ENCODE measurements at regions of chrX and their contacts with region 1.

Region 1: DNA sequence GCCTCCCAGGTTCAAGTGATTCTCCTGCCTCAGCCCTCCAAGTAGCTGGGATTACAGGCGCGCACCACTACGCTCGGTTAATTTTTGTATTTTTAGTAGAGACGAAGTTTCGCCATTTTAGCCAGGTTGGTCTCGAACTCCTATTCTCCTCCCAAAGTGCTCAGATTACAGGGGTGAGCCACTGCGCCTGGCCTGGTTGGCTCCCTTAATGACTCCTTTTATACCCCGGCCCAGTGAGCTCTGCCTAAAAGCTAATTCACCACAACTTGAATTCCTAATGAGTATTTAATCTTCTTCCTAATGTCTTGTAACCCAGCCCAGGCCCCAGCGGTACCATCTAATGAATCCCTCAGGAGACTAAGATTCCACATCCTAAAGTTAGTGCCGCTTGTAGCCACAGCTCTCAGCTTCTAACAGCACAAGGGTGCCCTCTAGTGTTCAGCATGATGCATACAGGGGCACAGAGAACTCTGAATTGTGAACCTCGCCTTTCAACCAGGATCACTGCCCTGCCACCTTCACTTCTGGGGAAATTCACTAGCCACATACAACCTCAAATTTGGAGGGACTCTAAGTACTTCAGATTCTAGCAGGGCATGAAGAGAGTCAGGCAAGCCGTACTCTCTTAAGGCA is 89.5 kb downstream of the OR13H1 start:
- DNase-seq: peak; percentile 44
- H3K4me3 Mint-ChIP-seq: no peak overlapping the region
- H3K27ac Mint-ChIP-seq: no peak overlapping the region
- H3K4me1 Mint-ChIP-seq: peaks cover 3% of the 10 kb centered on the region
- H3K27me3 Mint-ChIP-seq: no peaks in the 10 kb centered on the region

Region 2: GRCh38 chrX:130975947-130976346 is 657.5 kb before region 1 on chrX:
- CTCF ChIA-PET with region 1: interaction called, 4 read pairs
- POLR2A ChIA-PET with region 1: no interaction called
- intact Hi-C with region 1: loop called (anchors 1 kb)
- DNase-seq: peak; percentile 27
- H3K4me3 Mint-ChIP-seq: no peak overlapping the region
- H3K27ac Mint-ChIP-seq: no peak overlapping the region
- H3K4me1 Mint-ChIP-seq: no peaks in the 10 kb centered on the region
- H3K27me3 Mint-ChIP-seq: no peaks in the 10 kb centered on the region

Region 3: DNA sequence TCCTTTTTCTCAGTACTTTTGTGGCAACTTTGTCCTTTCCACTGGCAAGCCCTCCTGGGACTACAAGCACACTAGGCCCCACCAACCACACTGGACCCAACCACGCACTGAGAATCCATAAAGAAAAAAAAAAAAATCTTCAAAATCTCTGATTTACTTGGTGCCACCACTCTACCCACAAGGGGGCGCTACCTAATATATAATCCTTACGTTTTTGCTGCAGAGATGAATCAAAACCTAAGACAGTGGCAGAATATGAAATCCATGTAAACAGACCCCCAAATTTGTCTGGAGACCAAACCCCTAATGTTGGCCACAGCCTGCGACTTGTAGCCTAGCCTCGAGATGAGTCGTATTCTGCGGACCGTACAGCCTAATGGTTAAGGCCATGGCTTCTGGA is 638.7 kb before region 1 on chrX:
- CTCF ChIA-PET with region 1: no interaction called
- POLR2A ChIA-PET with region 1: no interaction called
- intact Hi-C with region 1: loop called (anchors 1 kb)
- DNase-seq: peak; percentile 13
- H3K4me3 Mint-ChIP-seq: no peak overlapping the region
- H3K27ac Mint-ChIP-seq: no peak overlapping the region
- H3K4me1 Mint-ChIP-seq: no peaks in the 10 kb centered on the region
- H3K27me3 Mint-ChIP-seq: no peaks in the 10 kb centered on the region

Region 4: DNA sequence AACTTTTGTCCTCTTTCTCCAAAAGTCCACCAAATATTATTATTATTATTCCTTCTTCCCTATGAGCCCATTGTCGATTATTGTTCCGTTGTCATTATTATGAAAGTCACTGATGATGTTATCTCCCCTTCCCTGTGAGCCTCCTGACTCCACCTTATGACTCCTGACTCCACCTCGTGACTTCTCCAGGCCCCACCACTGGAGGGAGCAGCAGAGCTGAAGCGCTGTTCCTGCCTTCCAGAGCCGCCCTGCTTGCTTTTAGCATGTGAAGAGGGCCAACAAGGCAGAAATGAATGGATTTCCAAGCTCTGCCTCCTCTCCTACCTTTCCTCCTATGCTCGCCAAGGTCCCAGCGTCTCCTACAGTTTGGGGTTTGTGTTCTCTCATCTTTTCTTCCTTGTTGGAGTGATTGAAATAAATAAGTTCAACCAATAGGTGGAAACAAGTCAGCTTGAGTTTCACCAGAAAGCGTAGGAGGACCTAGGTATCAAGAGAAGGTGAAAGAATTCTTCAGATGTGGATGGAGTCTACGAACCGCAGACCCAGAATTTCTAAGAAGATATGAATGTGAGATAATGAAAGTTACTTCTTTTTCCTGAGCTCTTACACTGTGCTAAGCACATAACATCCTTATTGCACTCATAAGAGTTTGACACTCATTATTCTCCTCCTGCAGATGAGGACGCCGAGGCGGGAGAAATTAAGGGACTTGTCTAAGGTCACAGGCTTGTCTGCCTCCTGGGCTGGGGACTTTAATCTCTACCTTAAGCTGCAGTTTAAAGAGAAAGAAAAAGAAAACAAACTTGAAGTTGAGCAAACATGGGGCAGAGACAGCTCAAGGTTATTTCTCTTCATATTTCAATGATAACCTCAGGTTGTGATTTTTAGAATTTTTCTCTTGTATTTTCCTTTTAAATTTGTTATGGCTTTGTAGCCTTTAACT is 370.4 kb before region 1 on chrX:
- CTCF ChIA-PET with region 1: no interaction called
- POLR2A ChIA-PET with region 1: no interaction called
- intact Hi-C with region 1: loop called (anchors 2 kb)
- DNase-seq: peak; percentile 24
- H3K4me3 Mint-ChIP-seq: no peak overlapping the region
- H3K27ac Mint-ChIP-seq: no peak overlapping the region
- H3K4me1 Mint-ChIP-seq: peaks cover 2% of the 10 kb centered on the region
- H3K27me3 Mint-ChIP-seq: no peaks in the 10 kb centered on the region

Region 5: GRCh38 chrX:131677655-131678628 is 44.5 kb after region 1 on chrX:
- CTCF ChIA-PET with region 1: interaction called, 8 read pairs
- POLR2A ChIA-PET with region 1: no interaction called
- intact Hi-C with region 1: loop called (anchors 5 kb)
- DNase-seq: peak; percentile 35
- H3K4me3 Mint-ChIP-seq: no peak overlapping the region
- H3K27ac Mint-ChIP-seq: no peak overlapping the region
- H3K4me1 Mint-ChIP-seq: no peaks in the 10 kb centered on the region
- H3K27me3 Mint-ChIP-seq: no peaks in the 10 kb centered on the region

Region 6: DNA sequence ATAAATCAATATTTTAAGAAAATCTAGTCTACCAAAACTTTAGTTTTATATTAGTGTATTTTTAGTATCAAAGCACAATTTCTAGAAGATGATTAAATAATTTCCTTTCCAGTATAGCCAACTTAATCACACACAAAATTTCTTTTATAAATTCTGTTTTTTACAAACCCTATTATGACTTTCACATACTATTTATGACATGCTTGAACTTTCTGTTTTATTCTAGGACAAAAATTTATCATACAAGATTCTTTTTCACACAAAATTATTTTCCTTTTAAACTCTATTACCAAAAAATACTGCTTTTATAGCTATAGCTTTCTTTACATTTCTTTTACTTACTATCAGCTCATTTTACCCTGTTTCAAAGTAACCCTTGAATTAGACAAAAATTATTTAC is 60.0 kb after region 1 on chrX:
- CTCF ChIA-PET with region 1: no interaction called
- POLR2A ChIA-PET with region 1: no interaction called
- intact Hi-C with region 1: no loop called
- DNase-seq: no peak
- H3K4me3 Mint-ChIP-seq: no peak overlapping the region
- H3K27ac Mint-ChIP-seq: no peak overlapping the region
- H3K4me1 Mint-ChIP-seq: no peaks in the 10 kb centered on the region
- H3K27me3 Mint-ChIP-seq: no peaks in the 10 kb centered on the region

Region 7: GRCh38 chrX:131841496-131842410 is 208.4 kb after region 1 on chrX:
- CTCF ChIA-PET with region 1: no interaction called
- POLR2A ChIA-PET with region 1: no interaction called
- intact Hi-C with region 1: no loop called
- DNase-seq: peak; percentile 27
- H3K4me3 Mint-ChIP-seq: no peak overlapping the region
- H3K27ac Mint-ChIP-seq: no peak overlapping the region
- H3K4me1 Mint-ChIP-seq: no peaks in the 10 kb centered on the region
- H3K27me3 Mint-ChIP-seq: no peaks in the 10 kb centered on the region

Region 8: DNA sequence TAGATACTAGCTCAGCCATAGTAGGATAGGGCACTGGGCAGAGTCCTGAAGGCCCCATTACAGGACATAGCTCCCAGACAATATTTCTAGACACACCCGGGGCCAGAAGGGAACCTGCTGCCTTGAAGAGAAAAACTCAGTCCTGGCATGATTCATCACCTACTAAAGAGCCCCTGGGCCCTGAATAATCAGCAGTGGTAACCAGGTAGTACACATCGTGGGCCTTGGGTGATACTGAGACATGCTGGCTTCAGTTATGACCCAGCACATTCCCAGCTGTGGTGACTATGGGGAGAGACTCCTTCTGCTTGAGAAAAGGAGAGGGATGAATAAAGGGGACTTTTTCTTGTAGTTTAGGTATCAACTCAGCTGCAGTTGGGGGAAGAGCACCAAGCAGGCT is 285.4 kb after region 1 on chrX:
- CTCF ChIA-PET with region 1: no interaction called
- POLR2A ChIA-PET with region 1: no interaction called
- intact Hi-C with region 1: no loop called
- DNase-seq: peak; percentile 21
- H3K4me3 Mint-ChIP-seq: no peak overlapping the region
- H3K27ac Mint-ChIP-seq: no peak overlapping the region
- H3K4me1 Mint-ChIP-seq: peaks cover 2% of the 10 kb centered on the region
- H3K27me3 Mint-ChIP-seq: peaks cover 2% of the 10 kb centered on the region